ENCODE measurements at regions of chr5 and their contacts with region 1.

Region 1: GRCh38 chr5:91419571-91420537 is 36.7 kb upstream of the ARRDC3 start:
- DNase-seq: peak; percentile 86
- H3K4me3 ChIP-seq: no peak overlapping the region
- H3K27ac ChIP-seq: no peak overlapping the region
- H3K4me1 ChIP-seq: peaks cover 31% of the 10 kb centered on the region
- H3K27me3 ChIP-seq: no peaks in the 10 kb centered on the region
- CTCF ChIP-seq: peak; percentile 71

Region 2: DNA sequence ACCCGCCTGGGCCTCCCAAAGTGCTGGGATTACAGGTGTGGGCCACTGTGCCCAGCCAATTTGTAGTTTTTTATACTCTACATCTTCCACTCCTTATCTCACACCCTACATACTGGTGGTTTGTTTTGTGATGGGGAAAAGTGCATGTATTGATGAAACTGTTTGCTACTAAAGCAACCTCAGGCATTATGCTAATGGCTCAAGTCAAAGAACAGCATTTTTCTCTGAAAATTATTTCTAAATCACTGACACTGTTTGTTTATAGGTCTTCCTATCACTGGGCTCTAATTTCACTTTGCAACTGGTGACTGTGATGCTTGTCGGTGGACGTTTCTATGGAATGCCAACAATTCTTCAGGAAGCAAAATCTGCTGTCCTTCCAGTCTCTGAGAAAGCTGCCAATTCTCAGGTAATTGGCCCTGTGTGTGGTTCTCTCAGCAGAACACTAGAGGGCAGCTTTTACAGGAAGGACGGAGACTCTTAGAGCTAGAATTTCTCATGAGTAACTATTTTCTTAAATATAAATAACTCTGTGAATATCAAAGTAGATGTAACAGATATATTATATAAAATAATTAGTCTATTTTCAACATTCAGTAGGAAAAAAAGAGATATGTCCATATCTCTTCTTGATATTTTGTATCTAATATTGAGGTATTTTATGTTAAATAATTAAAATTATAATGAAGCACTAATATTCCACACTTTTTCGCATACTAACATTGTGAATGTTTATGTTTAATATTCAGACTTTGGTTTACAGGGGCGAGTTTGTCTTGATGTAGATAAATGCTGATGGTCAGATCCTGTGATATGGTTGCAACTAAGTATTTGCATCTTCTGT is 617.2 kb before region 1 on chr5:
- CTCF ChIA-PET with region 1: interaction called, 16 read pairs
- POLR2A ChIA-PET with region 1: no interaction called
- intact Hi-C with region 1: loop called (anchors 5 kb)
- DNase-seq: peak; percentile 67
- H3K4me3 ChIP-seq: no peak overlapping the region
- H3K27ac ChIP-seq: no peak overlapping the region
- H3K4me1 ChIP-seq: no peaks in the 10 kb centered on the region
- H3K27me3 ChIP-seq: no peaks in the 10 kb centered on the region
- CTCF ChIP-seq: peak; percentile 80

Region 3: GRCh38 chr5:90809311-90810056 is 610.4 kb before region 1 on chr5:
- CTCF ChIA-PET with region 1: no interaction called
- POLR2A ChIA-PET with region 1: no interaction called
- intact Hi-C with region 1: loop called (anchors 5 kb)
- DNase-seq: no peak
- H3K4me3 ChIP-seq: no peak overlapping the region
- H3K27ac ChIP-seq: no peak overlapping the region
- H3K4me1 ChIP-seq: no peaks in the 10 kb centered on the region
- H3K27me3 ChIP-seq: no peaks in the 10 kb centered on the region
- CTCF ChIP-seq: no peak

Region 4: DNA sequence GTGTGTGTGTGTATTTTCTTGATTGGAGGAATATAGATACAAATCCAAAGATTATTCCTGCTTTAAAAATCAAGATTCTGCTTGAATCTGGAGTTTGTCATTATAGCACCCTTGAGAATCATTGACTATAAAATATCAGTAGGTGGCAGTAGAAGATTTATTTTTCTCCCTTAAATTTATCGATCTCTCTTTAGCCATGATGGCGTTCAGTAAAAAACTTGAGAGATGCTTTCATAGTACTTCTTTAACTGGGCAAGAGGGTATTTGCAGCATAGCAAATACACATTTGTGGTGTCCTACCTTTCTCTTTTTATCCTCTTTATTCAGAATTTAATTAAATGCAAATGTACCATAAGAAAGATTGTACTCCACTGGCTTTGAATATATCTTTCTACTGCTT is 553.5 kb before region 1 on chr5:
- CTCF ChIA-PET with region 1: interaction called, 22 read pairs
- POLR2A ChIA-PET with region 1: no interaction called
- intact Hi-C with region 1: loop called (anchors 2 kb)
- DNase-seq: peak; percentile 73
- H3K4me3 ChIP-seq: no peak overlapping the region
- H3K27ac ChIP-seq: no peak overlapping the region
- H3K4me1 ChIP-seq: peaks cover 2% of the 10 kb centered on the region
- H3K27me3 ChIP-seq: no peaks in the 10 kb centered on the region
- CTCF ChIP-seq: peak; percentile 58

Region 5: GRCh38 chr5:90932052-90932699 is 487.7 kb before region 1 on chr5:
- CTCF ChIA-PET with region 1: interaction called, 7 read pairs
- POLR2A ChIA-PET with region 1: no interaction called
- intact Hi-C with region 1: loop called (anchors 5 kb)
- DNase-seq: peak; percentile 82
- H3K4me3 ChIP-seq: no peak overlapping the region
- H3K27ac ChIP-seq: peak overlapping the region; percentile 2
- H3K4me1 ChIP-seq: peaks cover 11% of the 10 kb centered on the region
- H3K27me3 ChIP-seq: no peaks in the 10 kb centered on the region
- CTCF ChIP-seq: peak; percentile 85

Region 6: GRCh38 chr5:91469517-91470165 is 49.8 kb after region 1 on chr5:
- CTCF ChIA-PET with region 1: no interaction called
- POLR2A ChIA-PET with region 1: no interaction called
- intact Hi-C with region 1: loop called (anchors 1 kb)
- DNase-seq: peak; percentile 23
- H3K4me3 ChIP-seq: no peak overlapping the region
- H3K27ac ChIP-seq: no peak overlapping the region
- H3K4me1 ChIP-seq: peaks cover 8% of the 10 kb centered on the region
- H3K27me3 ChIP-seq: no peaks in the 10 kb centered on the region
- CTCF ChIP-seq: no peak

Measured in A673 (cell line).